ENCODE measurements at regions of chr4 and their contacts with region 1.

Region 1: GRCh38 chr4:121182296-121182695 is 18.2 kb upstream of the TNIP3 start:
- DNase-seq: no peak
- H3K4me3 Mint-ChIP-seq: peak overlapping the region; percentile 74
- H3K27ac Mint-ChIP-seq: peak overlapping the region; percentile 87
- H3K4me1 Mint-ChIP-seq: peaks cover 72% of the 10 kb centered on the region
- H3K27me3 Mint-ChIP-seq: no peaks in the 10 kb centered on the region

Region 2: GRCh38 chr4:121053601-121054143 is 128.6 kb before region 1 on chr4:
- CTCF ChIA-PET with region 1: no interaction called
- POLR2A ChIA-PET with region 1: no interaction called
- intact Hi-C with region 1: no loop called
- DNase-seq: no peak
- H3K4me3 Mint-ChIP-seq: no peak overlapping the region
- H3K27ac Mint-ChIP-seq: no peak overlapping the region
- H3K4me1 Mint-ChIP-seq: peaks cover 3% of the 10 kb centered on the region
- H3K27me3 Mint-ChIP-seq: peaks cover 23% of the 10 kb centered on the region

Region 3: DNA sequence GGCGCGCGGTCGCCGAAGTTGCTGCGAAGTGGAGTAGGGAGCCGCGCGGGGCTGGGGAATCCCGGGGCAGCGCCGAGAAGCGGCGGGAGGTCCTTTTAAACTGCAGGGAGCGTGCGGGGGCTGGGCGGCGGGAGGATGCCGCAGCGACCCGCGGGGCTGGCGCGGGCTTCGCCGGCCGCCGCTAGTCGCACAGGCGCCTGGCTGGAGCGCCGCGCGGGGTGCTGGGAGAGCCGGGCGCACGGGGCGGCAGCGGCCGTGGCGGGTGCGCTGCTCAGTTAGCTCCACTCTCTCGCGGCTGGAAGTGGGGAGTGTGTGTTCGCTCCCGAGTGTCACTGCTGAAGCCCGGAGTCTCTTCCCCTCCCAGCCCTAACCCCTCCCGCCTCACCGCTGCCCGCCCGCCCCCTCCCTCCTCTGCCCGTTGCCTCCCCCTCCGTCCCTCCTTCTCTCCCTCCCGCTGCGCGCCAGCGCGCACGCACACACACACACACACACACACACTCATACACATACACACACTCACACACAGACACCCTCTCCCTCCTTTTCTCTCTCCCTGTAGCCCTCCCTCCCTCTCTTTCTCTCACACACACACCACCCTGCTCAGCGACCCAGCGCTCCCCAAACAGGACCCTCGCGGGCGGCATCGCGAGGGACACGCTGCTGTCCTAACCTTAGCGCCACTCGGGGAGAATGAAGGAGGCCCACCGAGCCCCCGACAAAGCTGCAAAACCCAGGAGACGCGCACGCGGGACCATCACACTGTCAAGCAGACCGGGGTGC is 109.9 kb before region 1 on chr4 and contains the start of gene NDNF:
- CTCF ChIA-PET with region 1: no interaction called
- POLR2A ChIA-PET with region 1: no interaction called
- intact Hi-C with region 1: loop called (anchors 5 kb)
- DNase-seq: peak; percentile 63
- H3K4me3 Mint-ChIP-seq: peak within 1 kb of the TSS; percentile 71
- H3K27ac Mint-ChIP-seq: no peak within 1 kb of the TSS
- H3K4me1 Mint-ChIP-seq: peaks cover 18% of the 10 kb centered on the region
- H3K27me3 Mint-ChIP-seq: peaks cover 56% of the 10 kb centered on the region
- total RNA-seq, gene NDNF: not detected

Region 4: DNA sequence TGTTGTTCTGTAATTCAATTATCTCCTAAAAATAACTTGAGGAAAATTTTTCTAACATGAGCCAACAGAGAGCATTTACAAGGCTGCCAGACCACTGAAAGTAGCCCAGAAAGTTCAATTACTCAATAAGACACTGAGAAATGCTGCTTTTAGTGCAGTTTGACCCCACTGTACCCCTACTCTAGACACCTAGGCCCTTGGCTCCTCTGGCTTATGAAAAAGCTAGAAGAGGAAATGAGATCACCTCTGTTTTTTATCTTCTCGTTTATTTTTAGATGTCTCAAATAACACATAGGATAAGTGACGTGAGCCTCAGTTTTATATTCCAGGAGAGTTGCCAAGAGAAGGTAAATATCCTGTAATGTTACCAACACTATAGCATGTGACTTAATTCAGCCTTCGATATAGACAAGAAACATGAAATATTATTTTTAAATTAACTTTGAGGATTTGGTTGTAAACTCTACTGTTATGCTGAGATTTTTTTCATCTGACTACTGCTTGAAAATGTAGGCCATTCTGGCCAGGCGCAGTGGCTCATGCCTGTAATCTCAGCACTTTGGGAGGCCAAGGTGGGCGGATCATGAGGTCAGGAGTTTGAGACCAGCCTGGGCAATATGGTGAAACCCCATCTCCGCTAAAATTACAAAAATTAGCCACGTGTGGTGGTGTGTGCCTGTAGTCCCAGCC is 42.6 kb before region 1 on chr4:
- CTCF ChIA-PET with region 1: no interaction called
- POLR2A ChIA-PET with region 1: no interaction called
- intact Hi-C with region 1: loop called (anchors 2 kb)
- DNase-seq: no peak
- H3K4me3 Mint-ChIP-seq: no peak overlapping the region
- H3K27ac Mint-ChIP-seq: no peak overlapping the region
- H3K4me1 Mint-ChIP-seq: peaks cover 37% of the 10 kb centered on the region
- H3K27me3 Mint-ChIP-seq: no peaks in the 10 kb centered on the region

Region 5: GRCh38 chr4:121199742-121200561 is 17.7 kb after region 1 on chr4:
- CTCF ChIA-PET with region 1: interaction called, 6 read pairs
- POLR2A ChIA-PET with region 1: no interaction called
- intact Hi-C with region 1: loop called (anchors 1 kb)
- DNase-seq: peak; percentile 66
- H3K4me3 Mint-ChIP-seq: peak overlapping the region; percentile 10
- H3K27ac Mint-ChIP-seq: peak overlapping the region; percentile 60
- H3K4me1 Mint-ChIP-seq: peaks cover 34% of the 10 kb centered on the region
- H3K27me3 Mint-ChIP-seq: no peaks in the 10 kb centered on the region

Region 6: GRCh38 chr4:121462660-121463261 is 280.5 kb after region 1 on chr4:
- CTCF ChIA-PET with region 1: no interaction called
- POLR2A ChIA-PET with region 1: no interaction called
- intact Hi-C with region 1: no loop called
- DNase-seq: peak; percentile 35
- H3K4me3 Mint-ChIP-seq: no peak overlapping the region
- H3K27ac Mint-ChIP-seq: no peak overlapping the region
- H3K4me1 Mint-ChIP-seq: no peaks in the 10 kb centered on the region
- H3K27me3 Mint-ChIP-seq: peaks cover 26% of the 10 kb centered on the region

Region 7: GRCh38 chr4:121706595-121707021 is 524.3 kb after region 1 on chr4:
- CTCF ChIA-PET with region 1: no interaction called
- POLR2A ChIA-PET with region 1: no interaction called
- intact Hi-C with region 1: loop called (anchors 5 kb)
- DNase-seq: peak; percentile 83
- H3K4me3 Mint-ChIP-seq: no peak overlapping the region
- H3K27ac Mint-ChIP-seq: peak overlapping the region; percentile 59
- H3K4me1 Mint-ChIP-seq: peaks cover 38% of the 10 kb centered on the region
- H3K27me3 Mint-ChIP-seq: peaks cover 26% of the 10 kb centered on the region